Naive thymus-derived CD8-positive, alpha-beta T cell (primary cell): ENCODE measurements at regions of chr20 and their contacts with region 1.

Region 1: DNA sequence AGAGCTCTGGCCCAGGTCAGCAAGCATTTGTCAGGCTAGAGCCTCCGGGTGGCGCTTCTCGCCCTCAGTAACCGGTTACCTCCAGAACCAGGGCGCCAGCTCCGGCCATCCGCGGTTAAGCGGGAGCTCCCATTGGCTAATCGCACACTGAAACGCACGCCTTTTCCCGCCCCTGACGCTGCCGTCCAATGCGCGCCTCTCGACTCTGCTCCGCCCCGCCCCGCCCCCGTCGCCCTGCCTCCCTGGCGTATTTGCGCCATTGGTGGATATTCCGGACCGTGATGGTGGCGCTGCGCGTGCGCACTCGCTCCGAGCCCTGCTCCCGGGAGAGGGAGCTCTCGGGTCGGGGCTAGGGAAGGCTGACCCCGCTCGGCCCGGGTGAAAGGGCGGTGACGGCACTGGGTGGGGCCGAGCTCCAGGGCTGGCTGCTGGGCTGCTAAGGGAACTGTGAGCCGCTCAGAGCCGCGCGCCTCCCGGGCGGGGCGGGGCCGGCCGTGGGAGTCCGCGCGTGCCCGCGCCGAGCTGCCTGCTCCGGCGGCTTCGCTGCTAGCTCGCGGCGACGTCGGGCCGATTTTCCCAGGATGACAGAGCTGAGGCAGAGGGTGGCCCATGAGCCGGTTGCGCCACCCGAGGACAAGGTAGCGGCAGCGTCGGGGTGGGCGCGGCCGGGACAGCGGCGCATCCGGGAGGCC is at the start of gene CDS2:
- DNase-seq: peak; percentile 96 to 100 (median 100)
- ATAC-seq: peak; percentile 83 to 85
- H3K4me3 Mint-ChIP-seq: peak within 1 kb of the TSS; percentile 87 to 99 (median 94)
- H3K27ac Mint-ChIP-seq: peak within 1 kb of the TSS; percentile 58 to 99 (median 98)
- H3K4me1 Mint-ChIP-seq: peaks cover 20 to 48% (median 37%) of the 10 kb centered on the region in 4 donors
- H3K27me3 Mint-ChIP-seq: no peaks in the 10 kb centered on the region
- polyA plus RNA-seq, gene CDS2: 32.3 to 47.3 (median 39.7) TPM

Region 2: DNA sequence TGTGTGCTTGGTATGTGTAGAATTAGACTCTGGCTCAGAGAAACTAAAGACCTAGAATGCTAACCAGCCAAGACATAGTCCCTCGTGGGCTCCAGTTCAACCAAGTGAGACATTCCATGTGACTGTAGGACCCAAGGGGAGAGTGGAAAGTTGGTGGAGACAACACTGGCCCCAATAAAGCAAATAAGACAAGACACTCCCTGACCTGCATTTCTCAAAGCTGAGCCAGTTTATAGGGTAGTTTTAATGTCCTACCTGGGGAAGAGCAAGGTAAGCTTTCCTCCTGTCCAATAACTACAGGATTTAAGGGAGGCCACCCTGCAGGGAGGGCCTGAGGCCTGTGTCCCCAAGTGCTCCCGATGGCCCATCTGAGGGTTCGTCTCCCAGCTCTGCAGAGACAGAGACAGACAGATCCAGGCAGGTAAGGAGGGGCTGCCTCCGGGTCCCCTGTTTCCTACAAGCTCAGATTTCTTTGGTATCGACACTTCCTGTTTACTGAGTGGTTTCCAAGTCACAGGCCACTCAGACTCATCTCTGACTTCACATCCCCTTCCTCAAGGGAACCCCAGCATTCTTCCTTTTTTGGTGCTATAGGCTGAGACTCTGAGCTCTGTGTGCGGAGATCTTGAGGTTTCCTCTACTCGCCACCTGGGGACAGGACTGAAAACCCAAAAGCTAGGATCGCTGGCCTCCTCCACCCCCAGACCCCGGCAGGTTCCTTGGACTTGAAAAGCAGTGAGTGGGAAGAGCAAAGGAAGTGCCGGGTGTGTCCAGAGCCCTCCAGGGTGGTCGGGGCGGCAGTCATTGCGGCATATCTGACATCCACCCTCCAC is 312.6 kb before region 1 on chr20:
- POLR2A ChIA-PET with region 1: interaction called, 13 read pairs
- DNase-seq: peak; percentile 50 to 90 (median 82)
- ATAC-seq: peak; percentile 73 to 75
- H3K4me3 Mint-ChIP-seq: peak overlapping the region; percentile 90 to 98 (median 92)
- H3K27ac Mint-ChIP-seq: peak overlapping the region; percentile 97 to 100 (median 99)
- H3K4me1 Mint-ChIP-seq: peaks cover 46 to 88% (median 77%) of the 10 kb centered on the region in 4 donors
- H3K27me3 Mint-ChIP-seq: no peaks in the 10 kb centered on the region

Region 3: DNA sequence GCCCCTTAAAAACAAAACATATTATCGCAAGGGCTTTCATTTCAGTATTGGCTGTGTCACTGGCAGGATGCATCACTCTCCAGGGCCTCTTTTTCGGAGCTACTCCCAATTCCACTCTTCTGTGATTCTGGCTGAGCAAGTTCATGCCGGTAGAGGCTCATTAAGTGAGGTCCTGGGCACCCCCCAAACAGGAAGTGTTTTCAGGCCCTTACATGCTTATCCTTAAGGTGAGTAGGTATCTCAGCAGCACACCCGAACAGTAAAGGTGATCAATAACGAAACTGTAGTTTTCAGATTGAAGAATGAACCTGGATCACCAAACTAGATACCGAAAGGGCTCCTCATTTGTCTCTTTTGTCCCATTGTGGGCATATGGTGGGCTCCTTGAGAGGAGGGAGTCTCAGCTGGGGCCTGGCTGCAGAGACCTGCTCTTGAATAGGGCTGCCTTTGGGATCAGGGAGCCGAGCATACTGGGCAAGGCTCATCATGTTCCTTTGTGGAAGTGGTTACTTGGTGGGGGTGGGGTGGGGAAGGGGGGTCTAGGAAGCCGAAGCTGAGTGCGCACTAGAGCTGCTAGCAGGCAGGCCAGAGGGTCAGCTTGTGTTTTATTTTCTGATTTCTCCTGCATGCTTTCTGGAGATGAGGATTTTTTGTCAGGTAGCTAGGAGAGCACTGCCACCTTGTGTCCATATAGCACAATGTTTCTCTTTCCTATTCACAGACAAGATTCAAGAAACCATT is 65.3 kb after region 1 on chr20:
- POLR2A ChIA-PET with region 1: interaction called, 27 read pairs
- DNase-seq: peak in 7 of 10 donors; percentile 5 to 59 (median 39)
- ATAC-seq: peak; percentile 66 to 80
- H3K4me3 Mint-ChIP-seq: no peak overlapping the region
- H3K27ac Mint-ChIP-seq: peak overlapping the region in 9 of 10 donors; percentile 44 to 89 (median 82)
- H3K4me1 Mint-ChIP-seq: peaks cover 0 to 3% (median 2%) of the 10 kb centered on the region in 4 donors
- H3K27me3 Mint-ChIP-seq: no peaks in the 10 kb centered on the region